ENCODE measurements at regions of chr19 and their contacts with region 1.

Region 1: GRCh38 chr19:2977001-2977685 is at the start of gene TLE6:
- DNase-seq: peak; percentile 96
- H3K4me3 Mint-ChIP-seq: peak within 1 kb of the TSS; percentile 92
- H3K27ac Mint-ChIP-seq: peak within 1 kb of the TSS; percentile 18
- H3K4me1 Mint-ChIP-seq: peaks cover 15% of the 10 kb centered on the region
- H3K27me3 Mint-ChIP-seq: peaks cover 8% of the 10 kb centered on the region
- total RNA-seq, gene TLE6: 0.52 to 1.6 TPM

Region 2: GRCh38 chr19:2494444-2495129 is 482.6 kb before region 1 on chr19:
- CTCF ChIA-PET with region 1: no interaction called
- intact Hi-C with region 1: no loop called
- DNase-seq: peak; percentile 64
- H3K4me3 Mint-ChIP-seq: peak overlapping the region; percentile 58
- H3K27ac Mint-ChIP-seq: no peak overlapping the region
- H3K4me1 Mint-ChIP-seq: peaks cover 19% of the 10 kb centered on the region
- H3K27me3 Mint-ChIP-seq: peaks cover 40% of the 10 kb centered on the region

Region 3: GRCh38 chr19:2680808-2681207 is 296.3 kb before region 1 on chr19:
- CTCF ChIA-PET with region 1: no interaction called
- intact Hi-C with region 1: no loop called
- DNase-seq: no peak
- H3K4me3 Mint-ChIP-seq: no peak overlapping the region
- H3K27ac Mint-ChIP-seq: no peak overlapping the region
- H3K4me1 Mint-ChIP-seq: no peaks in the 10 kb centered on the region
- H3K27me3 Mint-ChIP-seq: no peaks in the 10 kb centered on the region

Region 4: DNA sequence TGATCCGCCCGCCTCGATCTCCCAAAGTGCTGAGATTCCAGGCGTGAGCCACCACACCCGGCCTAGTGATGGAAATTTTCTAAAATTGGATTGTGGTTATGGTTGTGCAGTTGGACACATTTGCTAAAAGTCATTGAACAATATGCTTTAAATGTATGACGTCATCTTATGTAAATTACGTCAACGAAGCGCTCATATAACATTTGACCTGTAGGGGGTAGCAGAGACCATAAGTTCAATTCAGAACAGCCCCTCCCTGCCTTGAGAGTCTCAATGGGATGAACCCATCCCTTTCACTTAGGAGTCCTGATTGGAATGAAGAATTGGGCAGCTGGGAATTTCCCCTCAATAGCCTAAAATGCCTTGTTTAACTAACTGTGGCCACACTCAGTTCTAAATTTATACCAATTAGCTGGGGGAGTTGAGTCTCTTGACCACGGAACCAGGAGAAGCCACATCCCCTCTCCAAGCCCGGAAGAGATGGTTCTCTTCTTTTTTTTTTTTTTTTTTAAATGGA is 15.0 kb before region 1 on chr19:
- CTCF ChIA-PET with region 1: interaction called, 14 read pairs
- intact Hi-C with region 1: no loop called
- DNase-seq: peak; percentile 58
- H3K4me3 Mint-ChIP-seq: peak overlapping the region; percentile 22
- H3K27ac Mint-ChIP-seq: no peak overlapping the region
- H3K4me1 Mint-ChIP-seq: peaks cover 3% of the 10 kb centered on the region
- H3K27me3 Mint-ChIP-seq: no peaks in the 10 kb centered on the region

Region 5: GRCh38 chr19:2997720-2998119 is 20.6 kb after region 1 on chr19:
- CTCF ChIA-PET with region 1: no interaction called
- intact Hi-C with region 1: no loop called
- DNase-seq: no peak
- H3K4me3 Mint-ChIP-seq: no peak overlapping the region
- H3K27ac Mint-ChIP-seq: peak overlapping the region; percentile 5
- H3K4me1 Mint-ChIP-seq: no peaks in the 10 kb centered on the region
- H3K27me3 Mint-ChIP-seq: no peaks in the 10 kb centered on the region

Region 6: GRCh38 chr19:3035542-3036118 is 58.5 kb after region 1 on chr19:
- CTCF ChIA-PET with region 1: interaction called, 3 read pairs
- intact Hi-C with region 1: loop called (anchors 2 kb)
- DNase-seq: peak; percentile 98
- H3K4me3 Mint-ChIP-seq: peak overlapping the region; percentile 87
- H3K27ac Mint-ChIP-seq: peak overlapping the region; percentile 94
- H3K4me1 Mint-ChIP-seq: peaks cover 19% of the 10 kb centered on the region
- H3K27me3 Mint-ChIP-seq: no peaks in the 10 kb centered on the region

Measured in activated naive CD4-positive, alpha-beta T cell treated with anti-CD3 and anti-CD28 coated beads for 36 hours (primary cell).